OCI-LY7 (cell line): ENCODE measurements at regions of chr14 and their contacts with region 1.

Region 1: DNA sequence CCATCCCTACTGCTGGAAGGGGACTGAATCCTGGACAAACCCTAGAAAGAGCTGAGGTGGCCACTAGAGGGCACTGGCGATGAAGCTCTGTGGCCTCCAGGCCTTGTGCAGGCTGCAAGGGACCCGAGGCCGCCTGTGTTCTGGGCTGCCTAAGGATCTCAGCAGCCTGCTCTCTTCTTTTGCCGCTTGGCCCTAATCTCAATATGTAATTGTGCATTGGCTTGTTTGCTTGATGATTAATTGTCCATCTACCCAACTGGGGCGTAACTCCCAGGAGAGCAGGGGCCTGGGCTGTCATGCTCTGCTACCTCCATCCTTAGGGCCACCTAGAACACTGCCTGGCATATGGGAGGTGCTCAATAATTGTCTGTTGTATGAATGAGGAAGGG is 73.8 kb downstream of the SYNE3 start:
- DNase-seq: peak; percentile 90
- H3K4me3 ChIP-seq: no peak overlapping the region
- H3K27ac ChIP-seq: peak overlapping the region; percentile 51
- H3K4me1 ChIP-seq: peaks cover 69% of the 10 kb centered on the region
- CTCF ChIP-seq: peak; percentile 91

Region 2: DNA sequence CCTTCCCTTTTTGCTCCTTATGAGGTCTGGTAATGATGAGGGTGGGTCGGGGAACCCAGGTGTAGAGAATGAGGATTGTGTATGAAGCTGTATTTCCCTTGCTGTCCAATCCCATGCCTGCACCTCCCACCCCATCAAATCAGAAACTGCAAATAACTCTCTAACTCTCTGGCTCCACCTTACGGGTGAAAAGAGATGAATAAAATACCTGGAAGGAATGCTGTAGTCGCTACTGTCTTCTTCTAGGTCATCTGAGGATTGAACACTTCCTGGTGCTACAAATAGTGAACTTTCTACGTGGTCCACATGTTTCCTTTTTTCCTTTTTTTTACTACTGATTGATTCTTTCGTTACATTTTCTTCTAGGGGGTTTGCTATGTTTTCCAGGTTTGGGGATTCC is 246.3 kb before region 1 on chr14:
- CTCF ChIA-PET with region 1: no interaction called
- POLR2A ChIA-PET with region 1: no interaction called
- intact Hi-C with region 1: no loop called
- DNase-seq: peak; percentile 51
- H3K4me3 ChIP-seq: no peak overlapping the region
- H3K27ac ChIP-seq: no peak overlapping the region
- H3K4me1 ChIP-seq: no peaks in the 10 kb centered on the region
- CTCF ChIP-seq: peak; percentile 82

Region 3: DNA sequence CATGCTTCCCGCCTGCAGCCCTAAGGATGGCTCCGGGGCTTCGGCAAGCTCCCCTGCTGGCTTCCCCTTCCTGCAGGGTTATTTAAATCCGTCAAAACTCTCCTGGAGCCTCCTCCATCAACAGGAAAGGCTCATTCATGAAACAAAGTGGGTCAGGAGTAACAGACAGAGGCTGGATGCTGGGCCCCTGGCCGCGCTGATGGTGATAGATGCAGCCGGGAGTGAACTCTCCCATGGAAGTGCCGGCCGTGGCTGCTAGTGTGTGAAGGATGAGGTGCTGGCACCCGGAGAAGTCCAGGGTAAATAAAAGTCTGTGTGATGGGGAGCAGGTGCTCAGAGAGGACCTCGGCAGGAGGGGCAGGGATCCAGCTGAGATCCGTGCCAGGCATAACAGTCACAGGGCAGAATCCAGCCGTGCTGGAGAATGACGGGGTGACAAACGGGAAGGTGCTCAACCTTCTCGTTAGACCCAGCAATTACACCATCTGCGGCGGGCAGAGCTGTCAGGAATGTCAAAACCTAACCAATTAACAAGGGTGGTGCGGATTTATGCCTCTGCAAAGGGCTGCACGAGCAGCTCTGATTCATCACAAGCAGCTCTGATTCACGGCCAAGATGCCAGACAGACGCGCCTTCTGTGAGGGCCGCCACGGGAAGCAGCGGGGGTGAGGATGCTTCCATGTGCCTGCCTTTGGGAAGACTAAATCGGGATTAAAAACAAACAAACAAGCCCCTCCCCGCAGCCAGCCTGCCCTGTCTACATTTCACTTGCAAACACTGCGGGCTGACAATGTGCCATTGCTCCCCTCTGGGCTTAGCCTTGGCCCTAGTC is 18.2 kb after region 1 on chr14:
- CTCF ChIA-PET with region 1: interaction called, 15 read pairs
- POLR2A ChIA-PET with region 1: interaction called, 74 read pairs
- intact Hi-C with region 1: loop called (anchors 1 kb)
- DNase-seq: no peak
- H3K4me3 ChIP-seq: no peak overlapping the region
- H3K27ac ChIP-seq: no peak overlapping the region
- H3K4me1 ChIP-seq: peaks cover 43% of the 10 kb centered on the region
- CTCF ChIP-seq: no peak

Region 4: DNA sequence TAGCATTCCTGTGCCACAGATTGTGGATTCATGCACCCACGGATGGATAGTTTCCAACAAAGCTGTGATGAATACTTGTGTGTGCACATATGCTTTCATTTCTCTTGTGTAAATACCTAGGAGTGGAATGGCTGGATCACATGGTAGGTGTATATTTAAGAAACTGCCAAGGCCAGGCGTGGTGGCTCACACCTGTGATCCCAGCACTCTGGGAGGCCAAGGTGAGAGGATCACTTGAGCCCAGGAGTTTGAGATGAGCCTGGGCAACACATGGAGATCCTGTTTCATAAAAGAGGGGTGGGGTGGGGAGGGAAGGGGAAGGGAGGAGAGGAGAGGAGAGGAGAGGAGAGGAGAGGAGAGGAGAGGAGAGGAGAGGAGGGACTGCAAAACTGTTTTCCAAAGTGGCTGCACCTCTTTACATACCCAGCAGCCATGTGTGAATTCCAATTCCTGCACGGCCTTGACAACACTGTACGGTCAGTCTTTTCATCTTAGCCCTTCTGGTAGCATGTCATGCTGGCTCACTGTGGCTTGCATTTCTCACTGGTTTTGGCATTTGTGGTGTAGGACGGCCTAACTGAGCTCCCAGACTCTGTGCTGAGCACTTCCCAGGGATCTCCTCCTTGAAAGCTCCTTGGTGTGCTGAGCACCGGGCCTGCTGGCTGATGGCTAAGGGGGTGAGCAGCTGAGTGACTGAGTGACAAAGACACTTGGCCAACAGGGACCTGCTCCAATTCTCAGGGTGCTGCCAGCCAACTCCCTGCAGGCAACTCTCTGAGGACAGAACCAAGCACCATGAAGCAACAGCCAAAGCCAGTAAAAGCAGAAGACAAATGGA is 46.0 kb after region 1 on chr14:
- CTCF ChIA-PET with region 1: interaction called, 3 read pairs
- POLR2A ChIA-PET with region 1: interaction called, 6 read pairs
- intact Hi-C with region 1: loop called (anchors 2 kb)
- DNase-seq: peak; percentile 43
- H3K4me3 ChIP-seq: peak overlapping the region; percentile 63
- H3K27ac ChIP-seq: peak overlapping the region; percentile 87
- H3K4me1 ChIP-seq: peaks cover 70% of the 10 kb centered on the region
- CTCF ChIP-seq: no peak

Region 5: DNA sequence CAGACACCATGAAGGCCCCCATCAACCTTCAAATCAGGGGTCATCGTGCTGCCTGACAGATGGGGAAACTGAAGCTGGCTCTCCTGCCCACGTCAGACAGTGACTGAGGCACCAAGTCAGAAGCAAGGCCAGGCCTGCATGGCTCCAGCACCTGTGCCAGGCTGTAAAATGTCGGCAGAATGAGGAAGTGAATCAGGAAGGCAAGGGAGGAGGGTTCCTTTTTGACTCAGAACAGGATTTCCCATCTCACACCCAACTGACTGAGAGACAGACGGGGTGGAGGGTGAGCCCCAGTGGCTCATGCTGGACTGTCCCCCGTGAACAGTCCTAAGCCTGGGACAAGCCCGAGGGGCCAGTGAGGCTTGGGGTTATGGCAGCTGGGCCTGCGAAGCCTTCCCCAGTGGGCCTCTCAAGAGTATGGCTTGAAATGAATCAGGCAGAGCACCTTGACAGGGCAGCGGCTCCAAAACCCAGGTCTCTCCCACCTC is 53.0 kb after region 1 on chr14:
- CTCF ChIA-PET with region 1: interaction called, 3 read pairs
- POLR2A ChIA-PET with region 1: interaction called, 10 read pairs
- intact Hi-C with region 1: loop called (anchors 2 kb)
- DNase-seq: peak; percentile 87
- H3K4me3 ChIP-seq: peak overlapping the region; percentile 17
- H3K27ac ChIP-seq: peak overlapping the region; percentile 68
- H3K4me1 ChIP-seq: peaks cover 59% of the 10 kb centered on the region
- CTCF ChIP-seq: no peak

Region 6: GRCh38 chr14:95515596-95516552 is 73.2 kb after region 1 on chr14:
- CTCF ChIA-PET with region 1: interaction called, 10 read pairs
- POLR2A ChIA-PET with region 1: interaction called, 4 read pairs
- intact Hi-C with region 1: no loop called
- DNase-seq: peak; percentile 88
- H3K4me3 ChIP-seq: peak overlapping the region; percentile 64
- H3K27ac ChIP-seq: no peak overlapping the region
- H3K4me1 ChIP-seq: peaks cover 57% of the 10 kb centered on the region
- CTCF ChIP-seq: peak; percentile 71

Region 7: DNA sequence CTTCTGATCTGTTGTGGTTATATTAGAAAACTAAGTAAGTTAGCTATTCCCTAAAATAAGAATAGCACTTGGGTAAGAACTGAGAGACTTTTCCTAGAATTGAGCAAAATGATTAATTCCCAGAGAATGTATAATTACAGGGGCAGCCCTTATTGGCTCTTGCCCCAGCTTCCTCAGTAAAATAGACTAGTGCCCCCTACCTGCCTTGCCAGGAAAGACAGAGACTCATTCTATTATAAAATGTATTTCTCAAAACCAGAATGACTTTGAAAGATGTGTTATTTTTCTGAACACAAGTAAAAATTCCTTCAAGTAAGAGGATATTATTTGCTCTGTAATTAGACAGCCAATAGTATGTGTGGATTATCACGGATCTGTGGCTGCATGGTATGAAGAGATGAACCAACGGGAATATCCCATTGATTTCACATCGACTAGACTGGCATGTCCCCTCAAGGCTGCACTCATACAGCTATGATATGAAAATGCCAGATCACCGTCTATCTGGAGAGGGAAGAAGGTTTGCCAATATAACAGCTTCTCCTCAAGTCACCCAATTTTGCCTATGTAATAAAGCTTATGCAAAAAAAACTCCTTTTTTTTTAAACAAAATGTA is 84.9 kb after region 1 on chr14:
- CTCF ChIA-PET with region 1: interaction called, 9 read pairs
- POLR2A ChIA-PET with region 1: interaction called, 6 read pairs
- intact Hi-C with region 1: loop called (anchors 1 kb)
- DNase-seq: peak; percentile 66
- H3K4me3 ChIP-seq: no peak overlapping the region
- H3K27ac ChIP-seq: no peak overlapping the region
- H3K4me1 ChIP-seq: peaks cover 45% of the 10 kb centered on the region
- CTCF ChIP-seq: peak; percentile 98

Region 8: GRCh38 chr14:95534299-95535225 is 91.9 kb after region 1 on chr14 and contains the start of gene GLRX5:
- CTCF ChIA-PET with region 1: interaction called, 3 read pairs
- POLR2A ChIA-PET with region 1: interaction called, 4 read pairs
- intact Hi-C with region 1: loop called (anchors 2 kb)
- DNase-seq: peak; percentile 100
- H3K4me3 ChIP-seq: peak within 1 kb of the TSS; percentile 93
- H3K27ac ChIP-seq: peak within 1 kb of the TSS; percentile 80
- H3K4me1 ChIP-seq: peaks cover 54% of the 10 kb centered on the region
- CTCF ChIP-seq: no peak
- total RNA-seq, gene GLRX5: 59.6 and 68.2 TPM in 2 replicates